Lower leg skin (tissue), 4 donors: ENCODE measurements at regions of chr6 and their contacts with region 1.

Region 1: DNA sequence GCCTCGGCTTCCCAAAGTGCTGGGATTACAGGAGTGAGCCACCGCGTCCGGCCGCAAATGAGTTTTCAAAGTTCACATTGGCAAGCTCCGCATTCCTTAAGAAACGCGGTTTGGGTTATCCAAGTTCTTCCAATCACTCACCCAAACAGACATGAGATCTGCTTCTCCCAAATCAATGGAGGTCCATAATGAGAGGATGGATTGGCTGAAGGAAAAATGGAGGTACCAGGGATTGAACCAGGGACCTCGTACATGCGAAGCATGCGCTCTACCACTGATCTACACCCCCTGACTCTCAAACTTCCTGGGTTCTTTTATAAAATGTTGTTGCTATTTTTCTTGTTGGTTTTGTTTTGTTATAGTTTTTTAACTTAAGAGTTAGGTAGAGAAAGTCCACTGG is 170.0 kb downstream of the GPX5 start:
- DNase-seq: no peak
- H3K4me3 ChIP-seq: no peak overlapping the region
- CTCF ChIP-seq: no peak
- POLR2A ChIP-seq: no peak

Region 2: GRCh38 chr6:28789553-28790083 is 93.9 kb after region 1 on chr6:
- intact Hi-C with region 1: no loop called
- DNase-seq: no peak
- H3K4me3 ChIP-seq: no peak overlapping the region
- CTCF ChIP-seq: no peak
- POLR2A ChIP-seq: no peak

Region 3: GRCh38 chr6:29028821-29029220 is 333.1 kb after region 1 on chr6:
- intact Hi-C with region 1: loop called (anchors 10 kb)
- DNase-seq: no peak
- H3K4me3 ChIP-seq: no peak overlapping the region
- CTCF ChIP-seq: no peak
- POLR2A ChIP-seq: no peak